Activated CD8-positive, alpha-beta memory T cell treated with anti-CD3 and anti-CD28 coated beads, Interleukin-2, amount 10 ng/mL, durations not matched to agents 7 days and 5 days (primary cell): ENCODE measurements at regions of chr3 and their contacts with region 1.

Region 1: DNA sequence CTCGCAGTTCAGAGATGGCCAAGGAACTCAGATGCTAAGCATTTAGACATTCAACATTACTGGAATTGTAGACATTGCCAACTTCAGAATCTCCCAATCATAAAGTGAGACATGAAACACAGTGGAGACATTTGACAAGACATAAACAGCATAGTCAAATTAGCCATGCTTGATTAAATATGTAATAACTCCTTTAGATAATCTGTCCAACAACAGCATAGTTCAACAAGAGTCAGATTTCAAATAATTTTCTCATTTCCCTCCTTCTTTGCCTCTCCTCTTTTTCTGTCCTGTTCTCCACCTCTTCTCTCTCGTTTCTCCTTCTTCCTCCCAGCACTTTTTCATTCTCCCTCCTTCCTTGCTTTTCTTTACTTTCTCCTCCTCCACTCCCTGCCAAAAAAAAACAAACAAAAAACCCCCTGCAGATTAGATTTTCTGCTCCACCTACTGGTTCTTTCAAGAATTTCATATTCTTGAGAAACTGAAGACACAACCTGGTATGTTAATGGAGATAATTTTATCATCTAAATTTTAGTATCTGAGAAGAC is 20.2 kb downstream of the CPOX start:
- DNase-seq: no peak
- ATAC-seq: peak; percentile 59
- H3K4me3 Mint-ChIP-seq: peak overlapping the region; percentile 67
- H3K27ac Mint-ChIP-seq: peak overlapping the region; percentile 93
- H3K4me1 Mint-ChIP-seq: peaks cover 68% of the 10 kb centered on the region
- H3K27me3 Mint-ChIP-seq: no peaks in the 10 kb centered on the region

Region 2: DNA sequence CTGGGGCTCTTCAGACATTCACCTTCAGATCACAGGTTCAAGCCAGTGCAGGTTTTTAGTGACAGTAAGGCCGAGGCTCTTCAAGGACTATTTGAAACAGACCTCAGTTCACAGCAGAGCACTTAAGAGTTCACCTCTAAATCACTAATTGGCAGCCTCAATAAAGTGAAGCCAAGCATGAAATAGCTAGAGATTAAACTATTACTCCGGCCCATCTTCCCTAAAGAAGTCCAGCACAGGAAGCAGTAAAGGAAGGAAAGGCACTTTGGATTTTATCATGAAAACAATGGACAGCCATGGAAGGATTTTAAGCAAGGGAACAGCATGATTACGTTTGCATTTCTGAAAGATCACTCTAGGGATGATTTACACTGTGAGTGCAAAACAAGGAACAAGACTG is 836.3 kb before region 1 on chr3:
- CTCF ChIA-PET with region 1: no interaction called
- DNase-seq: no peak
- ATAC-seq: no peak
- H3K4me3 Mint-ChIP-seq: no peak overlapping the region
- H3K27ac Mint-ChIP-seq: no peak overlapping the region
- H3K4me1 Mint-ChIP-seq: no peaks in the 10 kb centered on the region
- H3K27me3 Mint-ChIP-seq: peaks cover 29% of the 10 kb centered on the region

Region 3: GRCh38 chr3:98593046-98593936 is 20.0 kb after region 1 on chr3 and contains the start of gene CPOX:
- CTCF ChIA-PET with region 1: interaction called, 12 read pairs
- DNase-seq: peak; percentile 94
- ATAC-seq: peak; percentile 98
- H3K4me3 Mint-ChIP-seq: peak within 1 kb of the TSS; percentile 99
- H3K27ac Mint-ChIP-seq: peak within 1 kb of the TSS; percentile 99
- H3K4me1 Mint-ChIP-seq: peaks cover 46% of the 10 kb centered on the region
- H3K27me3 Mint-ChIP-seq: no peaks in the 10 kb centered on the region
- total RNA-seq, gene CPOX: 71.6 to 88.5 TPM

Region 4: GRCh38 chr3:98705706-98706105 is 132.5 kb after region 1 on chr3:
- CTCF ChIA-PET with region 1: no interaction called
- DNase-seq: no peak
- ATAC-seq: no peak
- H3K4me3 Mint-ChIP-seq: no peak overlapping the region
- H3K27ac Mint-ChIP-seq: no peak overlapping the region
- H3K4me1 Mint-ChIP-seq: no peaks in the 10 kb centered on the region
- H3K27me3 Mint-ChIP-seq: peaks cover 9% of the 10 kb centered on the region